ENCODE measurements at regions of chr1 and their contacts with region 1.

Region 1: DNA sequence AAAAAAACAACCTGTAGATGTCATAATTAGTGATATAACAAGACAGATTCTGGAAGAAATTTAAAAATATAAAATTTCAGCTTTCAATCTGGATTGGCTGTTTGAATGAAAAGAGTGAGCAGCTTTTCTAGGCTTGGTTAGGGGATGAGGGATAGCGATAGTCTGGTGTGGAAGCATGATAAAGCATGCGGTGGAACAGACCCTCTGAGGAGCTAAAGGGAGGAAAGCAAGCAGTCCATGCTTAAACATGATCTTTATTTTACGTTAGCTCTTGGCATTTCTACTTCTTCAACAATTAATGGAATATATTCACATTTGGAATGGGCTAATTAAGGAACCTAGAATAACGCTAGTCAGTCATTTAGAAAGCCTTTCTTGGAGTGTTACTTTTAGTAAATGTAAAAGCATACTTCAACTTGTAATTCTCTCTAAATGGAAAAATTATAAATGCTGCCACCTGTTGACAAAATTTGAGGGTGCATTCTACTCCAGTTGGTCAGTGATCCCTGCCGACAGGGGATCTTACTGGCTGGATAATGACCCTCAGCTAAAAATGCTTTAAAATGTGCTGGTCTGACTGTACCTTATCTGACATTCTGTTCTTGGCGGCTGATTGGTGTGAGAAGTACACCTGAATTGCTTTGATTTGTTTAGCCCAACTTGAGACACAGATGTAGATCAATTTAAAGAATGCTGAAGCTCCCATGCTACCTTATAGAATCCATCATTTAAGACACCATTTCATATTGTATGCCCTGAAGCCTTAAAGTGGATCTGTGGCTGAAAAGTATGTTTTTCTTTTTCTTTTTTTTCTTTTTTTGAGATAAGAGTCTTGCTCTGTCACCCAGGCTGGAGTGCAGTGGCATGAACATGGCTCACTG is 61.2 kb downstream of the AK4 start:
- DNase-seq: peak; percentile 48
- H3K4me3 ChIP-seq: no peak overlapping the region
- H3K27ac ChIP-seq: no peak overlapping the region
- H3K4me1 ChIP-seq: no peaks in the 10 kb centered on the region
- H3K27me3 ChIP-seq: no peaks in the 10 kb centered on the region
- CTCF ChIP-seq: peak; percentile 73

Region 2: DNA sequence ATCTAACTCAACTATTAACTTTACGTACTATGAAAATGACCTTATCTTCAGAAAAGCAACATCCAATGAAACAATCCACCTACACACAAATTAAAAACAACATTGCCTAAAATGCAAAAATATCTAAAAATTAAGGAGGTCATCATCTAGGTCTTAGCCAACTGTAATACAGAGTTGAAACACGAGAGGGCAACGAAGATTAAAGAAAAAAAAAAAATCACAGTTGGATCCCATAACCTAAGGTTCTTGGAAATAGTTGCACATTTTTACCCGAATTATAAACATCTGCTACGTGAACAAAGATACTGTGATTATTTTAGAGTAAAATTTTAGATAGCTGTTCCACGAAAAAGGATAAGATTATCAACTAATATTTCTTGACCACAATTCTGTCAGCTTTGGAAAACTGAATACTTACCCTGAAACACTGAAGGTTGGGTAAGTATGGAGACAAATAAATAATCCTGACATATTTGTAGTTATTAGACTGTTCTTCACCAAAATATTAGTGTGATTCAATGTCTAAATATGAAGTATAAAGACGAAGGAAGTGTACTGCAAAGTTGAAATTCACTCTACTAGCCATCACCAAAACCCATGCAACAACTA is 149.2 kb before region 1 on chr1:
- CTCF ChIA-PET with region 1: interaction called, 3 read pairs
- POLR2A ChIA-PET with region 1: no interaction called
- intact Hi-C with region 1: loop called (anchors 1 kb)
- DNase-seq: peak; percentile 60
- H3K4me3 ChIP-seq: no peak overlapping the region
- H3K27ac ChIP-seq: no peak overlapping the region
- H3K4me1 ChIP-seq: peaks cover 34% of the 10 kb centered on the region
- H3K27me3 ChIP-seq: no peaks in the 10 kb centered on the region
- CTCF ChIP-seq: peak; percentile 69

Region 3: GRCh38 chr1:65419681-65420589 is 210.7 kb after region 1 on chr1:
- CTCF ChIA-PET with region 1: no interaction called
- POLR2A ChIA-PET with region 1: no interaction called
- intact Hi-C with region 1: no loop called
- DNase-seq: peak; percentile 97
- H3K4me3 ChIP-seq: peak overlapping the region; percentile 66
- H3K27ac ChIP-seq: peak overlapping the region; percentile 89
- H3K4me1 ChIP-seq: peaks cover 5% of the 10 kb centered on the region
- H3K27me3 ChIP-seq: peaks cover 5% of the 10 kb centered on the region
- CTCF ChIP-seq: no peak

Region 4: GRCh38 chr1:65572701-65573421 is 363.6 kb after region 1 on chr1:
- CTCF ChIA-PET with region 1: no interaction called
- POLR2A ChIA-PET with region 1: no interaction called
- intact Hi-C with region 1: no loop called
- DNase-seq: no peak
- H3K4me3 ChIP-seq: no peak overlapping the region
- H3K27ac ChIP-seq: no peak overlapping the region
- H3K4me1 ChIP-seq: no peaks in the 10 kb centered on the region
- H3K27me3 ChIP-seq: no peaks in the 10 kb centered on the region
- CTCF ChIP-seq: no peak